ENCODE measurements at regions of chr15 and their contacts with region 1.

Region 1: DNA sequence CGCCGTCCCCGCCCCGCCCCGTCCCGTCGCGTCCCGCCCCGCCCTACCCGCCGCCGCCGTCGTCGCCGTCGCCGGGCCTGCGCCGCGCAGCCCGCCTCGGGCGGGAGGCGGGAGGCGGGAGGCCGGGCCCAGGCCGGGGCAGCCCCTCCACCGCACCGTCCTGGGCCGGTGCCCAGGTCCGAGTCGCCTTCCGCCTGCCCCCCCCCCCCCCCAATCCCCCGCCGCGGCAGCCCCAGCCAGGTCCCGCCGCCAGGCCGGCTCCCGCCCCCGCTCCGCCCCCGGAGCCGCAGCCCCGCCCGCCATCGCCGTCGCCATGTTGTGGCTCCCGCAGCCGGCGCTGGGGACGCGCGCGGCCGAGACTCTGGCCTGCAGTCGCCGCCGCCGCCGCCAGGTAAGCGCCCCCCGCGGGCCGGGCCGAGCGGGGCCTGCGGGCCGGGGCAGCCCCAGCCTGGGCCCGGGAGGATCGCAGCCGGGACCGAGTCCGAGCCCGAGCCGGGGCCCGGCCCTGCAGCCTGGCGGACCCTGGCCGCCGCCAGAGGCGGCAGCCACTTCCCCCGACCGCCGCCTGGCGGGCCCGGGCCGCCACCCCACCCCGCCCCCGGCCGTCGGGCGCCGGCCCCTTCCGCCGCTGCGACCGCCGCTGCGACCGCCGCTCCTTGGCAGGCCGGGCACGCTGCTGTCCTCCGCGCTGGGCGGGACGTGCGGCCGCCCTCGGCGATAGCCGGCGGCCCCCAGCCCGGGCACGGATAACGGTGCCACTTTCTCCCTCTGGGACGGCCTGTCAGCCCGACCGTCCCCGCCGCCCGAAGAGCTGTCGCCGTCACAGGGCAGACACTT is at the start of gene ZNF592:
- DNase-seq: peak; percentile 82 to 88
- ATAC-seq: peak; percentile 65 to 82 (median 76)
- H3K4me3 ChIP-seq: peak within 1 kb of the TSS; percentile 87
- H3K4me3 Mint-ChIP-seq: peak within 1 kb of the TSS; percentile 96
- H3K27ac ChIP-seq: peak within 1 kb of the TSS; percentile 87
- H3K27ac Mint-ChIP-seq: peak within 1 kb of the TSS; percentile 96 to 99
- H3K4me1 ChIP-seq: peaks cover 36% of the 10 kb centered on the region
- H3K4me1 Mint-ChIP-seq: peaks cover 57 to 63% of the 10 kb centered on the region in 2 donors
- H3K27me3 ChIP-seq: no peaks in the 10 kb centered on the region
- H3K27me3 Mint-ChIP-seq: no peaks in the 10 kb centered on the region
- CTCF ChIP-seq: no peak
- total RNA-seq, gene ZNF592: 38.0 to 43.8 (median 39.1) TPM

Region 2: DNA sequence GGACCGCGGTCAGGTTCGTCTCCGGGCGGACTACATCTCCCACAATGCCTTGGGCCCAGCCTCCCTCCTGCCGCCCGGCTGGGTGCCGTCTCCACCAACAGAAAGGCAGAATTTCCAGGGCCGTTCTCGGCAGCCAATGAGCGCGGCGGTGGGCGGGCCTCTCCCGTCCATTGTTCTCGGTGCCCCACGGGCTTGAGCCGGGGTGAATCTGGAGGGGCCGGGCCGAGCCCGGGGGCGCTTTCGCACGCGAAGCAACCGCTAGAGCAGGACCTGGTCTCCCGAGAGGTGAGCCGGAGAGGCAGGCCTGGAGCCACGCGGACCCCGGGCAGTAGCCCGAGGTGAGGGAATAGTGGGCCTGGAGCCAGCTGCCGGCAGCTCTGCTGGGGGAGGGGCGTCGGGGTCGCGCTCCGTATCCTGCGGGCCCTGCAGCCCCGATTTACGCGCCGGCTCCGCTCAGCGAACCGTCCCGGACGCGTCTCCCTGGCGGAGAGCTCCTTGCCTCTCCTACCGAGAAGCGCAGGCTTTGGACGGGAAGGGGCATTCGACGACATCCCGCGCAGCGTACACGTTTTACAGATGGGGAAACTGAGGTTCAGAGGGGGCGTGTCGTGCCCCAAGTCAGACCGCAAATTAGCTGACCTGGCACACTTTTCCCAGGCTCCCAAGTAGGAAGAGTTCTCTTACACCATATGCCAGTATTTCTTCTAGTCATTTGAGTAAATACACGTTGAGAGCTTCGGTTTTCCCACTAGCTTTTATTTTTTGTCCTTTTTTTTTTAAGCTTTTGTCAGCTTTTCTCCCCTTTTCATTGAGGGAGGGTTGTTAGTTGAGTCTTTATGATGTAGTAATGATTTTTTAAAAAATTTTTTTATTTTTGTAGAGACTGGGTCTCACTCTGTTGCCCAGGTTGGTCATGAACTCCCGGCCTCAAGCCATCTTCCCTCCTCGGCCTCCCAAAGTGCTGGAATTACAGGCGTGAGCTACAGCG is 147.3 kb before region 1 on chr15 and contains the start of gene ZSCAN2:
- intact Hi-C with region 1: loop called (anchors 5 kb)
- DNase-seq: peak; percentile 92 to 94
- ATAC-seq: peak; percentile 97 to 99 (median 99)
- H3K4me3 ChIP-seq: peak within 1 kb of the TSS; percentile 86
- H3K4me3 Mint-ChIP-seq: peak within 1 kb of the TSS; percentile 95
- H3K27ac ChIP-seq: peak within 1 kb of the TSS; percentile 6
- H3K27ac Mint-ChIP-seq: peak within 1 kb of the TSS; percentile 83 to 94
- H3K4me1 ChIP-seq: peaks cover 39% of the 10 kb centered on the region
- H3K4me1 Mint-ChIP-seq: peaks cover 45 to 52% of the 10 kb centered on the region in 2 donors
- H3K27me3 ChIP-seq: no peaks in the 10 kb centered on the region
- H3K27me3 Mint-ChIP-seq: no peaks in the 10 kb centered on the region
- CTCF ChIP-seq: no peak
- total RNA-seq, gene ZSCAN2: 5.0 to 8.3 (median 5.5) TPM

Region 3: DNA sequence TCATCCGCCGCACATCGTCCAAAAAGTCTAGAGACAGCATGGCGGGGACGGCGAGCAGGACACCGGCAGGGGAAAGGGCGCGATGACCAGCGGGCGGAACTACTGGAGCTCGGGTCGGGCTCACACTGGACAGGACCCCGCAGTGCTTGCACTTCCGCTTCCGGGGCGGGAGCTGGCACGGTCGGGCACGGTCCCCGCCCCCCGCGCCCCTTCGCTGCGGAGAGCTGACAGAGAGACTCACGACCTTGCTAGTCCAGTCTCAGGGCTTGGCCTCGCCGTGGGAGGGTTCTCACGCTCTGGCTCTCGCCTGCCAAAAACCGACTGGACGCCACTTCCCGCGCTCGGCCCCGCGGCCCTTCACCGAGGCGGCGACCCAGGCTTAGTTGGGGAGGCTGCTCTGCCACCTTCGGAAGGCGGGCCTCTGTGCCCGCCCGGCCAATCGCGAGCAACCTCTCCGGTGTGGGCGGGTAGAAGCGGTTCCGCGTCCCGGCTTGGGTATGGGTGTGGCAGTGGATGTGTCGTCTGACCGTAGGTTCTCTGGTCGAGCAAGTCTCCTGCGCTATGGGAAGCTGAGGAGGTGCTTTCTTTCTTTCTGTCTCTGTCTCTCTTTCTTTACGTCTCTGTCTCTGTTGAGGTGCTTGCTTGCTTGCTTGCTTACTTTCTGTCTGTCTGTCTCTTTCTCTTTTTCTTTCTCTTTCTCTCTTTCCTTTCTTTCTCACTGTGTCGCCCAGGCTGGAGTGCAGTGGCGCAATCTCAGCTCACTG is 32.3 kb before region 1 on chr15 and contains the start of gene SEC11A:
- intact Hi-C with region 1: loop called (anchors 1 kb)
- DNase-seq: peak; percentile 93
- ATAC-seq: peak; percentile 94 to 98 (median 95)
- H3K4me3 ChIP-seq: peak within 1 kb of the TSS; percentile 96
- H3K4me3 Mint-ChIP-seq: peak within 1 kb of the TSS; percentile 96
- H3K27ac ChIP-seq: peak within 1 kb of the TSS; percentile 91
- H3K27ac Mint-ChIP-seq: peak within 1 kb of the TSS; percentile 92 to 97
- H3K4me1 ChIP-seq: peaks cover 15% of the 10 kb centered on the region
- H3K4me1 Mint-ChIP-seq: peaks cover 34 to 44% of the 10 kb centered on the region in 2 donors
- H3K27me3 ChIP-seq: no peaks in the 10 kb centered on the region
- H3K27me3 Mint-ChIP-seq: no peaks in the 10 kb centered on the region
- CTCF ChIP-seq: no peak
- total RNA-seq, gene SEC11A: 78.7 to 89.3 (median 81.8) TPM

Region 4: GRCh38 chr15:84734794-84735479 is 13.6 kb before region 1 on chr15:
- intact Hi-C with region 1: loop called (anchors 1 kb)
- DNase-seq: peak; percentile 40 to 86
- ATAC-seq: peak; percentile 66 to 75 (median 71)
- H3K4me3 ChIP-seq: peak overlapping the region; percentile 18
- H3K4me3 Mint-ChIP-seq: peak overlapping the region; percentile 88
- H3K27ac ChIP-seq: peak overlapping the region; percentile 50
- H3K27ac Mint-ChIP-seq: peak overlapping the region; percentile 83 to 96
- H3K4me1 ChIP-seq: peaks cover 37% of the 10 kb centered on the region
- H3K4me1 Mint-ChIP-seq: peaks cover 38 to 40% of the 10 kb centered on the region in 2 donors
- H3K27me3 ChIP-seq: no peaks in the 10 kb centered on the region
- H3K27me3 Mint-ChIP-seq: no peaks in the 10 kb centered on the region
- CTCF ChIP-seq: no peak

Region 5: DNA sequence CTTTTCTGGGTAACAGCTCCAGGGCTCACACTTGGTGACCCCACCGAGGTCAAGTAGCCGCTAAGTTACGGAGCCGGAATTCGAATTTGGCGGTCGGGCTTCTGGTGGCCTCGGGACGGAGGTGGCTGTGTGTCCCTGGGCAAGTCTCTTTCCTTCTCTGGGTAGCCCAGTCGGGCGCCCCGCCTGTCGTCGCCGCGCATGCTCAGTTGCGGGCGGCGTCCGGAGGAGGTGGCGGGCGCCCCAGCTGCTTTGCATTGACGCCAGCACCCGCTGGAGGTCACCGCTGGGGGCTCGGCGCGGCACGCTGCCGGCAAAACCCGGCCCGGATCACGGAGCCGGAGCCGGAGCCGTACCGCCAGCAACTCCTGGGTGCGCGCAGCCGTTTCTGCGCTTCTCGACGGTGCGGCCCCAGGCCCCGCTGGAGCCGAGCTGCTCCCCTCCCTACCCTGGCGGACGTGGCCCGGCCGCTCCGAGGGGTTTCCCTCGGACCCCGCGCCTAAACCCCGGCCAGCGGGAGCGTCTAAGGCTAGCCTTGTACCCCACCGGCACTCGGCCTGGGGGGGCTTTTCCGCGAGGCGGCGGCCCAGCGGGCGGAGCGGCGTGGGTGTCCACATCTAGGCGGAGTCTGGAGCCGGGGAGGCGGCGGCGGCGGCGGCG is 232.7 kb after region 1 on chr15:
- intact Hi-C with region 1: loop called (anchors 10 kb)
- DNase-seq: peak; percentile 96 to 98
- ATAC-seq: peak; percentile 69 to 86 (median 73)
- H3K4me3 ChIP-seq: peak overlapping the region; percentile 82
- H3K4me3 Mint-ChIP-seq: peak overlapping the region; percentile 97
- H3K27ac ChIP-seq: peak overlapping the region; percentile 100
- H3K27ac Mint-ChIP-seq: peak overlapping the region; percentile 90
- H3K4me1 ChIP-seq: peaks cover 19% of the 10 kb centered on the region
- H3K4me1 Mint-ChIP-seq: peaks cover 29 to 30% of the 10 kb centered on the region in 2 donors
- H3K27me3 ChIP-seq: no peaks in the 10 kb centered on the region
- H3K27me3 Mint-ChIP-seq: no peaks in the 10 kb centered on the region
- CTCF ChIP-seq: no peak

Measured in natural killer cell (primary cell).